Activated CD4-positive, alpha-beta T cell treated with anti-CD3 and anti-CD28 coated beads, Interleukin-2, amount 10 ng/mL, durations not matched to agents 7 days and 5 days (primary cell): ENCODE measurements at regions of chr16 and their contacts with region 1.

Region 1: GRCh38 chr16:25311049-25311448 is 53.4 kb upstream of the ZKSCAN2 start:
- DNase-seq: no peak
- H3K4me3 Mint-ChIP-seq: no peak overlapping the region
- H3K27ac Mint-ChIP-seq: no peak overlapping the region
- H3K4me1 Mint-ChIP-seq: no peaks in the 10 kb centered on the region
- H3K27me3 Mint-ChIP-seq: no peaks in the 10 kb centered on the region

Region 2: GRCh38 chr16:26830428-26831127 is 1519.5 kb after region 1 on chr16:
- CTCF ChIA-PET with region 1: no interaction called
- POLR2A ChIA-PET with region 1: interaction called, 11 read pairs
- DNase-seq: no peak
- H3K4me3 Mint-ChIP-seq: no peak overlapping the region
- H3K27ac Mint-ChIP-seq: no peak overlapping the region
- H3K4me1 Mint-ChIP-seq: no peaks in the 10 kb centered on the region
- H3K27me3 Mint-ChIP-seq: peaks cover 15% of the 10 kb centered on the region